A549 (cell line): ENCODE measurements at regions of chr20 and their contacts with region 1.

Region 1: GRCh38 chr20:49384437-49385088 is 97.9 kb downstream of the KCNB1 start:
- DNase-seq: peak; percentile 39 to 74
- ATAC-seq: peak; percentile 73 to 87
- H3K4me3 ChIP-seq: no peak overlapping the region
- H3K27ac ChIP-seq: no peak overlapping the region; a peak in 1 of 6 replicates
- H3K4me1 ChIP-seq: peaks cover 26% of the 10 kb centered on the region
- CTCF ChIP-seq: peak; percentile 67
- EP300 ChIP-seq: no peak
- POLR2A ChIP-seq: no peak
- RAD21 ChIP-seq: peak; percentile 26 to 34; a peak in 3 of 5 replicates

Region 2: DNA sequence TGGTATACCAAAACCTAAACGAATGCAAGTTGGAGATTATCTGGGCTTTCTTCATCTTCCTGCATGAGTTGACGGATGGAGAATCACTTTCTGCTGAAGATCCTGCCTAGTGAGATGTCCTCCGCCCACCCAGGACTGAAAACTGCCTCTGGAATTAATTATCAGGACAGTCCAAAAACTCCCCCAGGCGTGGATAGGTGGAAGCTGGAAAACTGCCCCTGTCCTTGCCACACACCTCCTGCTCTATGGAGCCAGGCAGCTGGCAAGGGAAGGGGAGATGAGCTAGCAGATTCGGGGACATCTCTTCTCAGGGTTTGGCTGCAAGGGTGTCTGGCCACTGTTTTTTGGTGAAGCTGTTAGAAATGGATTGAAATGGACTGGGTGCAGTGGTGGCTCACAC is 17.4 kb before region 1 on chr20:
- CTCF ChIA-PET with region 1: interaction called, 24 read pairs
- POLR2A ChIA-PET with region 1: no interaction called
- DNase-seq: no peak
- ATAC-seq: no peak
- H3K4me3 ChIP-seq: no peak overlapping the region
- H3K27ac ChIP-seq: no peak overlapping the region
- H3K4me1 ChIP-seq: no peaks in the 10 kb centered on the region
- CTCF ChIP-seq: no peak
- EP300 ChIP-seq: no peak
- POLR2A ChIP-seq: no peak
- RAD21 ChIP-seq: no peak

Region 3: GRCh38 chr20:49397525-49397924 is 13.0 kb after region 1 on chr20:
- CTCF ChIA-PET with region 1: interaction called, 60 read pairs
- POLR2A ChIA-PET with region 1: interaction called, 3 read pairs
- DNase-seq: peak; percentile 25 to 26
- ATAC-seq: peak; percentile 47 to 60; a peak in 5 of 6 replicates
- H3K4me3 ChIP-seq: no peak overlapping the region
- H3K27ac ChIP-seq: peak overlapping the region in 1 of 2 experiments; percentile 42; a peak in 2 of 6 replicates
- H3K4me1 ChIP-seq: peaks cover 7% of the 10 kb centered on the region; the same call in 1 of the 3 replicates
- CTCF ChIP-seq: no peak
- EP300 ChIP-seq: no peak
- POLR2A ChIP-seq: no peak
- RAD21 ChIP-seq: no peak

Region 4: GRCh38 chr20:49424536-49424935 is 40.0 kb after region 1 on chr20:
- CTCF ChIA-PET with region 1: interaction called, 19 read pairs
- POLR2A ChIA-PET with region 1: no interaction called
- DNase-seq: no peak
- ATAC-seq: no peak
- H3K4me3 ChIP-seq: no peak overlapping the region
- H3K27ac ChIP-seq: no peak overlapping the region
- H3K4me1 ChIP-seq: no peaks in the 10 kb centered on the region
- CTCF ChIP-seq: no peak
- EP300 ChIP-seq: no peak
- POLR2A ChIP-seq: no peak
- RAD21 ChIP-seq: no peak